Dorsolateral prefrontal cortex (tissue), 120 donors: ENCODE measurements at regions of chr6 and their contacts with region 1.

Region 1: DNA sequence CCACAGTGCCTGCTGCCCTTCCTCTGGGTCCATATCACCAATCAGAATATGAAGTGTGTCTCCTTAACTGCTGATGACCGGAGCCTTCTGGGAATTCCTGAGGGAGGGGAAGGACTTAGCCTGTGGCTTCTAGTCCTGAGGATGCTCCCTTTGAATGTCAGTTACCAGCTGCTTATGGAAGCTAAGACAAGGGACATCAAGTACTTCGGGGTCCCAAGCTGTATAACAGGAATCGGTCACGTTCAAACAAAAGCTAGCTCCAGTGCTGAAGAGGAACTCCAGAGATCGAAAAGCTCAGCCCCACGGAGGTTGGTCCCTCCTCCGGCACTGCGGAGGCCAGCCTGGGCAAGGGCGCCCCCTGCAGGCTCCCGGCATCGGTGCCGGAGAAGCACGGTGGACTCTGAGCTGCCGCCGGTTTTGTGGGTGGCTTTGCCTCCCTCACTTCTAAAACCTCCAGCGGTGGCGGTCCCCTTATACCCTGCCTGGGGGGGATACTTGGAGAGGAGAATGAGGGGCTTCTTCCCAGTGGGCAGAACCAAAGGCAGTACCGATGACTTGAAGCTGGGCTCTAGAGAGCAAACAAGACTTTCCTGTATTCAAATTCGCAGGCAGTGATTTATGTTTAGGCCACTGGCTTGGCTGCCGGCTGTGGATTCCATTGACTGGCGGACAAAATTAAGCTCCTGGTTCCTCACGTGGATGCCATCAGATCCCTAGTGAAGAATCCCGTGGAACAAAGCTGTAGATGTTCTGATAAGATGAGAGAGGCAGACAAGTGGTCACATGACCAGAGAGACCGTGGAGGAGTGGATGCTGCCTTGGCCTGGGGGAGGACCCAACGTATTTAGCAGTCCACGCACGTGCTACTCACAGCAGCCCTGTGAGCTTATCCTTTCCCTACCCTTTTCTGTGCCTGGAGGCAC is 16.2 kb upstream of the UBR2 start:
- DNase-seq: peak; percentile 83 to 96 (median 91)
- H3K4me3 ChIP-seq: peak overlapping the region; percentile 48 to 91 (median 68)
- H3K27ac ChIP-seq: peak overlapping the region; percentile 35 to 96 (median 90)
- H3K27me3 ChIP-seq: peaks cover 0 to 2% (median 0%) of the 10 kb centered on the region in 45 donors
- CTCF ChIP-seq: peak; percentile 87 to 100 (median 98)

Region 2: DNA sequence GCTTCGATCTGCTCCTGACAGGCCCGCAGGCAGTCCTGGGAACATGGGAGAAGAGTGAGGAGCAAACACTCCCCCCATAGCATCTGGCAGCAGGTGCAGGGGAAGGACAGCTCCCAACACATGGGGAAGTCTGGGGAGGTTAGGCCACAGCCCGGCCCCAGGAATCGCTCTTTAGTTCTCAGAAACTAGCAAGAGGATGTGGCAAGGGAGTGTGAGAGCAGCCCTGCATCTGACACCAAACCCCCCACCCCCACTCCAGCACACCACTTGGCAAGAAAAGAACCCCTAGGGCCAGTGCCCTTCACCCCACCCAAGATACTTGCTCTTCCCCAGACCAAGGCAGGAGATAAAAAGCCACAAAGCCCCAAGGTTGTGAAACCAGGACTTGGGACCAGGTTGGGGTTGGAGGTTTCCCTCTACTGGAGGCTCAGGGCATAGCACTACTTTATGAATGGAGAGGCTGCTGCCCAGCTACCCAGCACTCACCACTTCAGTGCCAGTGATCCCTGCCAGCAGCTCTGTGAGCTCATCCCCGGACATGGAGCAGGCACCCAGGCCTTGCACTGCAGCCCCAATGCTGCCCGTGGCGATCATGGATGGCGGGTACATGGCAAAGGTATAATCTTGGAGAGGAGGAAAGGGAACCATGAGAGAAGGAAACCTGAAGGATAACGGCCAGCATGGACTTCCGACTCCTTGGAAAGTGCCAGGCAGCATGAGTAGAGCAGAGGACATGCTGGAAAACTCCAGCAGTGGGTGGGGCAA is 611.4 kb before region 1 on chr6:
- intact Hi-C with region 1: loop called in 1 of 2 experiments (anchors 5 kb)
- DNase-seq: peak; percentile 57 to 85 (median 81)
- H3K4me3 ChIP-seq: peak overlapping the region in 10 of 59 donors; percentile 2 to 34 (median 16)
- H3K27ac ChIP-seq: peak overlapping the region in 50 of 59 donors; percentile 3 to 92 (median 63)
- H3K27me3 ChIP-seq: no peaks in the 10 kb centered on the region
- CTCF ChIP-seq: peak; percentile 55 to 89 (median 80)

Region 3: GRCh38 chr6:42075159-42075838 is 472.4 kb before region 1 on chr6:
- intact Hi-C with region 1: loop called (anchors 10 kb)
- DNase-seq: peak; percentile 52 to 78 (median 68)
- H3K4me3 ChIP-seq: no peak overlapping the region
- H3K27ac ChIP-seq: peak overlapping the region in 1 of 59 donors; percentile 27
- H3K27me3 ChIP-seq: no peaks in the 10 kb centered on the region
- CTCF ChIP-seq: peak; percentile 38 to 83 (median 72)

Region 4: GRCh38 chr6:42217519-42218367 is 329.9 kb before region 1 on chr6 and contains the start of gene MRPS10:
- intact Hi-C with region 1: loop called (anchors 5 kb)
- DNase-seq: peak; percentile 87 to 96 (median 92)
- H3K4me3 ChIP-seq: peak within 1 kb of the TSS; percentile 54 to 97 (median 80)
- H3K27ac ChIP-seq: peak within 1 kb of the TSS in 54 of 59 donors; percentile 2 to 88 (median 68)
- H3K27me3 ChIP-seq: no peaks in the 10 kb centered on the region
- CTCF ChIP-seq: peak in 52 of 56 donors; percentile 15 to 75 (median 49)
- total RNA-seq, gene MRPS10: 18.8 to 41.4 (median 29.6) TPM

Region 5: GRCh38 chr6:42260972-42261371 is 286.7 kb before region 1 on chr6:
- intact Hi-C with region 1: loop called (anchors 5 kb)
- DNase-seq: no peak
- H3K4me3 ChIP-seq: peak overlapping the region in 1 of 59 donors; percentile 6
- H3K27ac ChIP-seq: no peak overlapping the region
- H3K27me3 ChIP-seq: no peaks in the 10 kb centered on the region
- CTCF ChIP-seq: peak in 53 of 56 donors; percentile 15 to 67 (median 48)

Region 6: GRCh38 chr6:42390228-42390934 is 157.3 kb before region 1 on chr6:
- intact Hi-C with region 1: no loop called
- DNase-seq: no peak
- H3K4me3 ChIP-seq: no peak overlapping the region
- H3K27ac ChIP-seq: peak overlapping the region in 7 of 59 donors; percentile 6 to 39 (median 18)
- H3K27me3 ChIP-seq: no peaks in the 10 kb centered on the region
- CTCF ChIP-seq: no peak

Region 7: DNA sequence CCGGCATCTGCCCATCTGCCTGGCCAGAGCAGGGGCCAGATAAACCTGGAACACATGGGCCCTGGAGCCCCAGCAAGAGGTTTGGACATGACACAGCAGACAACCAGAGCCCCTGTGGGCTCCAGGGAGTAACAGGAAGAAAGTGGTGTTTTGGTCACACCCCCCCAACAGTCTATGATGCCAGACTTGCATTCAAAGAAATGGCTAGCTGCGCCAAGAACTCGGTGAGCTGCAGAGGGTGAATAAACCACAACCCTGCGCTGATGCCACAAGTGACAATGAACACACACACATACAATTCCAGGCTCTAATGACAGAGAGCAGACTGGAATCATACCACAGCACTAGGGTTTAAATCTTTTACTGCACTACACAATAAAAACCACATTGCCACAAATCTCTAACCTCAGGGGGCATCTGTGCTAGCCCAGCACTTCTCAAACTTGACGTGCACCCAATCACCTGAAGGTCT is 130.0 kb before region 1 on chr6:
- intact Hi-C with region 1: no loop called
- DNase-seq: no peak
- H3K4me3 ChIP-seq: no peak overlapping the region
- H3K27ac ChIP-seq: peak overlapping the region in 2 of 59 donors; percentile 11 to 13
- H3K27me3 ChIP-seq: no peaks in the 10 kb centered on the region
- CTCF ChIP-seq: no peak

Region 8: GRCh38 chr6:42453031-42453653 is 94.5 kb before region 1 on chr6:
- intact Hi-C with region 1: loop called in 1 of 2 experiments (anchors 5 kb)
- DNase-seq: peak in 9 of 10 donors; percentile 41 to 89 (median 81)
- H3K4me3 ChIP-seq: peak overlapping the region; percentile 50 to 92 (median 79)
- H3K27ac ChIP-seq: peak overlapping the region in 56 of 59 donors; percentile 38 to 98 (median 90)
- H3K27me3 ChIP-seq: no peaks in the 10 kb centered on the region
- CTCF ChIP-seq: peak in 3 of 56 donors; percentile 17 to 22 (median 17)

Region 9: DNA sequence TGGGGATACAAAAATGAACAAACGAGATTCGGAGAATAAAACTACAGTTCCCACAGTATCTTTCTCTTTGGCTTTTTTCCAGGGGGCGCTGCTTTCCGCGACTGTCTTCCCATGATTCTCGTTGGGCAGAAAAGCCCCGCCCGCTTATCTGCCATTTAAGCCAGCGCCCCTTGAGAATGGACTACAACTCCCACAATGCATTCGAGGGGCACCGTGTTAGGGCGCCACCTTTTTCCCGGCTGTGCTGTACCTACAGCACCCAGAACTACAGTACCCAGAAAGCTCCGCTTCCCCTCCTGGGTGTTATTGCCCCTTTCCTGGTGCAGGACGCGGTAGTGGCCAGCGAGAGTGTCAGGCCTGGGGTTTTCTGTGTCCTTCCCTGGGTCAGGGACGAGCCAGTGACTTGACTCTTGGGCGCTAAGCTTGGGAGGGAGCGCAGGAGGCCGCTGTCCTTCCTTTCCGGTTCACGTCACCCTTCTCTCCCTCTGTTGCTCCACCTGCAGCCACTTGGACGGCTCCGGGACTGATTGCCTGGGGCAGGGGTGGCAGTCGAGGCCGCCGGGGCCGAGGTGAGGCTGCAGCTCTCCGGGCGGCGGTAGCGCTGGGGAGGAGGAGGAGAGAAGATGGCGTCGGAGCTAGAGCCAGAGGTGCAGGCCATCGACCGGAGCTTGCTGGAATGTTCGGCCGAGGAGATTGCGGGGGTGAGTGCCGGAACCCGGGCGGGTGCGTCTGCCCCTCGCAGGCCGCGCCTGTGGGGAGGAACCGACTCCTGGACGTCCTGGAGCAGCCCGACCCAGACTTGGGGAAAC is 16.2 kb after region 1 on chr6 and contains the start of gene UBR2:
- intact Hi-C with region 1: loop called in 1 of 2 experiments (anchors 1 kb)
- DNase-seq: peak; percentile 90 to 99 (median 98)
- H3K4me3 ChIP-seq: peak within 1 kb of the TSS; percentile 57 to 100 (median 92)
- H3K27ac ChIP-seq: peak within 1 kb of the TSS; percentile 69 to 100 (median 97)
- H3K27me3 ChIP-seq: no peaks in the 10 kb centered on the region
- CTCF ChIP-seq: peak in 55 of 56 donors; percentile 29 to 86 (median 67)
- total RNA-seq, gene UBR2: 29.5 to 56.9 (median 37.2) TPM